OCI-LY7 (cell line): ENCODE measurements at regions of chr3 and their contacts with region 1.

Region 1: DNA sequence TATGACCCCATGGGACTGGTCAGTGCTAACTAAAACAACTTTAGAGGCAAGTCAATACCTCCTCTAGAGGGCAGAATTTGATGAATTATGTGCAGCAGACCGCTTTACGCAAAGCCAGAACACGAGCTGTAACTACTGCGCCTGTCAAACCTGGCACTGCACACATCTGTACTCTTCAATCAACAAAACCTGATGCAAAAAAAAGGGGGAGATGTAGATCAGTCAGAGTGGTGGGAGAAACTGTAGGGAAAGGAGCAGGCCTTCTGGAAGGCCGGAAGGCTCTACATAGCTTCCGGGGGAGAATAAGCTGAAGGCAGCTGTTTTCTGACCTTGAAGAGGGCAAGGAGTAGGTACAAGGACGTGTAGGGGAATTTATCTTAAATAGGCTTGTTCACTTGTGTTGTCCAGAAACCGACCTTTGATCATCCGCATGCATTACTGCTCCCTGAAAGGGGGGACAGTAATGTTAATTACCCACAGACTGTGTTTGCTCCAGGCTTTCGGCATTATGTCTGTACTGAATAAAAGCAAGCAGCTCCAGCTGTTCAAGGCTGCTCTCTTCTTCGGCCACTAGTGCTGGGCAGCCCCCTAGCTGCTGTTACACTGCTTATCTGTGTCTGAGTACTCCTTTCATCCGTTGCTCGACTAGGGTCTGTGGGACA is 41.0 kb downstream of the GPR160 start:
- DNase-seq: peak; percentile 51
- H3K4me3 ChIP-seq: no peak overlapping the region
- H3K27ac ChIP-seq: peak overlapping the region; percentile 63
- H3K4me1 ChIP-seq: peaks cover 59% of the 10 kb centered on the region
- CTCF ChIP-seq: peak; percentile 77

Region 2: DNA sequence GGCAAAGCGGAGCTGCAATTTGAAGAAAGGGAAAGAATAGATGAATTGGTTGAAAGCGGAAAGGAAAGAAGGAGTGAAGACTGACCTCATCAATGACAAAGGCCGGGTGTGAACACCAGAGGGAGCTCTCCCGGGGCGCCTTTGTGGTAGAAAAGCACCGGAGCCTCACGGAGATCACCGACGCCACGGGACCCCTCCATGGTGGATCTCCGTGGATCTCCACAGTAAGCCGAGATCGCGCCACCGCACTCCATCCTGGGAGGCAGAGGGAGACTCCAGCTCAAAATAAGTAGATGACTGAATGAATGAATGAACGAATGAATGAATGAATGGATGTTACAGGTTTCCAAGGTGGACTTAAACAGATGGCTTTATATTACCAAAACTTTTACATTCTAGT is 16.0 kb before region 1 on chr3:
- CTCF ChIA-PET with region 1: interaction called, 6 read pairs
- POLR2A ChIA-PET with region 1: interaction called, 26 read pairs
- intact Hi-C with region 1: no loop called
- DNase-seq: no peak
- H3K4me3 ChIP-seq: no peak overlapping the region
- H3K27ac ChIP-seq: peak overlapping the region; percentile 94
- H3K4me1 ChIP-seq: peaks cover 63% of the 10 kb centered on the region
- CTCF ChIP-seq: peak; percentile 69

Region 3: GRCh38 chr3:170098753-170099152 is 20.0 kb after region 1 on chr3:
- CTCF ChIA-PET with region 1: no interaction called
- POLR2A ChIA-PET with region 1: interaction called, 11 read pairs
- intact Hi-C with region 1: no loop called
- DNase-seq: no peak
- H3K4me3 ChIP-seq: no peak overlapping the region
- H3K27ac ChIP-seq: no peak overlapping the region
- H3K4me1 ChIP-seq: no peaks in the 10 kb centered on the region
- CTCF ChIP-seq: no peak